HepG2 (cell line): ENCODE measurements at regions of chr2 and their contacts with region 1.

Region 1: GRCh38 chr2:42095923-42096408 is 48.1 kb downstream of the PKDCC start:
- DNase-seq: peak; percentile 81
- ATAC-seq: peak; percentile 20
- H3K4me3 ChIP-seq: no peak overlapping the region
- H3K27ac ChIP-seq: peak overlapping the region; percentile 1
- H3K4me1 ChIP-seq: peaks cover 86% of the 10 kb centered on the region
- H3K27me3 ChIP-seq: no peaks in the 10 kb centered on the region
- CTCF ChIP-seq: peak; percentile 88
- EP300 ChIP-seq: 0 out of 4 replicates have a peak, but pooled peaks of 1 of the 2 experiments have one; percentile 58
- POLR2A ChIP-seq: no peak
- RAD21 ChIP-seq: peak; percentile 88

Region 2: DNA sequence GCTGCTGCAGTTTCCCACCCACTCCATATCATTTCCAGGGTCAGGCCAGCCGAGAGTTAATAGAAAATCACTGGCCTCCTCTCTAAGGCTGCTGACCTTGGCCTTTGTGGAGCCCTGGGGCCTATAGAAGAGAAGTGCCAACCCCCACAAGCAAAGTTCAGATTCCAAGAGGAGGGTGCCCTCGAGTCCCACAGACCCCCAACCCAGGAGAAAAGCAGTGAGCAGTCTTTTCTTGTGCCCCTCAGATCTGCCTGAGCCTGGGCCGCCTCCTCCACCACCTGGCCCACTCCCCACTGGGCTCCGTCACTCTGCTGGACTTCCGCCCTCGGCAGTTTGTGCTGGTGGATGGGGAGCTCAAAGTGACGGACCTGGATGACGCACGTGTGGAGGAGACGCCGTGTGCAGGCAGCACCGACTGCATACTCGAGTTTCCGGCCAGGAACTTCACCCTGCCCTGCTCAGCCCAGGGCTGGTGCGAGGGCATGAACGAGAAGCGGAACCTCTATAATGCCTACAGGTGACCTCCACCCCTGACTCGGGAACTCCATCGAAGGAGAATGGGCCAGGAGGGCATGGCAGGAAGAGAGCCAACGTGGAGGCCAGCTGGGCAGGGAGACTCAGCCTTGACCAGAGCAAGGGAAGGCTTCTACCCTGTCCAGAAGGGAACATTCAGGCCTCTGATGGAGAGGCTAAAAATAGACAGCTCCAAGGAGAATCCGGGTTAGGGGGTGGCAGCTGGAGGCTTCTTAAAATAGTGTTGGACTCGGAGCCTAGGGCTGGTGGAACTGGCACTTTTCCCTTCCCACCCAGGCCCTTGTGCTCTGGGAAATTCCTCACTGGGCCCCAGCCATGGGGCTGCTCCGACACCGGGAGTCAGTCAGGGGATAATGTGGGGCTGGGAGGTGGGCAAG is 41.9 kb before region 1 on chr2:
- CTCF ChIA-PET with region 1: no interaction called
- POLR2A ChIA-PET with region 1: interaction called, 20 read pairs
- in situ Hi-C with region 1: no loop called
- intact Hi-C with region 1: no loop called
- DNase-seq: peak; percentile 55
- ATAC-seq: peak; percentile 28
- H3K4me3 ChIP-seq: peak overlapping the region in 1 of 3 experiments; percentile 32; a peak in 2 of 6 replicates
- H3K27ac ChIP-seq: peak overlapping the region; percentile 39
- H3K4me1 ChIP-seq: peaks cover 91% of the 10 kb centered on the region
- H3K27me3 ChIP-seq: peaks cover 0 to under 1% of the 10 kb centered on the region in 2 experiments; a peak in 1 of 5 replicates
- CTCF ChIP-seq: 0 out of 2 replicates have a peak, but pooled peaks have one; percentile 8
- EP300 ChIP-seq: peak in 1 of 2 experiments; percentile 75; a peak in 2 of 4 replicates
- POLR2A ChIP-seq: no peak
- RAD21 ChIP-seq: no peak

Region 3: GRCh38 chr2:42169100-42169873 is 73.3 kb after region 1 on chr2 and contains the start of gene EML4:
- CTCF ChIA-PET with region 1: interaction called, 5 read pairs
- POLR2A ChIA-PET with region 1: interaction called, 13 read pairs
- in situ Hi-C with region 1: loop called (anchors 5 kb)
- intact Hi-C with region 1: loop called (anchors 1 kb)
- DNase-seq: peak; percentile 82
- ATAC-seq: peak; percentile 90
- H3K4me3 ChIP-seq: peak within 1 kb of the TSS; percentile 95 to 98 (median 95)
- H3K27ac ChIP-seq: peak within 1 kb of the TSS; percentile 78
- H3K4me1 ChIP-seq: peaks cover 35% of the 10 kb centered on the region
- H3K27me3 ChIP-seq: no peaks in the 10 kb centered on the region; a peak in 1 of 5 replicates
- CTCF ChIP-seq: peak; percentile 10; the same call in 1 of the 2 replicates
- EP300 ChIP-seq: no peak
- POLR2A ChIP-seq: peak; percentile 75 to 88
- RAD21 ChIP-seq: peak; percentile 72
- total RNA-seq, gene EML4: 243 and 362 TPM in 2 replicates

Region 4: GRCh38 chr2:42196403-42197267 is 100.7 kb after region 1 on chr2:
- CTCF ChIA-PET with region 1: interaction called, 39 read pairs
- POLR2A ChIA-PET with region 1: interaction called, 21 read pairs
- in situ Hi-C with region 1: loop called (anchors 5 kb)
- intact Hi-C with region 1: loop called (anchors 1 kb)
- DNase-seq: peak; percentile 83
- ATAC-seq: peak; percentile 73
- H3K4me3 ChIP-seq: peak overlapping the region in 1 of 3 experiments; percentile 41; a peak in 1 of 6 replicates
- H3K27ac ChIP-seq: peak overlapping the region; percentile 78
- H3K4me1 ChIP-seq: peaks cover 100% of the 10 kb centered on the region
- H3K27me3 ChIP-seq: no peaks in the 10 kb centered on the region
- CTCF ChIP-seq: peak; percentile 80
- EP300 ChIP-seq: peak; percentile 62 to 87
- POLR2A ChIP-seq: no peak
- RAD21 ChIP-seq: peak; percentile 85

Region 5: GRCh38 chr2:42223855-42224268 is 127.9 kb after region 1 on chr2:
- CTCF ChIA-PET with region 1: no interaction called
- POLR2A ChIA-PET with region 1: interaction called, 3 read pairs
- in situ Hi-C with region 1: no loop called
- intact Hi-C with region 1: loop called (anchors 1 kb)
- DNase-seq: no peak
- ATAC-seq: no peak
- H3K4me3 ChIP-seq: no peak overlapping the region
- H3K27ac ChIP-seq: no peak overlapping the region
- H3K4me1 ChIP-seq: peaks cover 98% of the 10 kb centered on the region
- H3K27me3 ChIP-seq: no peaks in the 10 kb centered on the region
- CTCF ChIP-seq: no peak
- EP300 ChIP-seq: no peak
- POLR2A ChIP-seq: no peak
- RAD21 ChIP-seq: no peak

Region 6: GRCh38 chr2:42238644-42239288 is 142.8 kb after region 1 on chr2:
- CTCF ChIA-PET with region 1: interaction called, 24 read pairs
- POLR2A ChIA-PET with region 1: interaction called, 4 read pairs
- in situ Hi-C with region 1: loop called (anchors 5 kb)
- intact Hi-C with region 1: loop called (anchors 1 kb)
- DNase-seq: peak; percentile 53
- ATAC-seq: peak; percentile 77
- H3K4me3 ChIP-seq: no peak overlapping the region
- H3K27ac ChIP-seq: no peak overlapping the region
- H3K4me1 ChIP-seq: peaks cover 100% of the 10 kb centered on the region
- H3K27me3 ChIP-seq: no peaks in the 10 kb centered on the region
- CTCF ChIP-seq: peak; percentile 76
- EP300 ChIP-seq: no peak
- POLR2A ChIP-seq: peak; percentile 25 to 33; a peak in 1 of 4 replicates
- RAD21 ChIP-seq: peak; percentile 70

Region 7: GRCh38 chr2:42328148-42328833 is 232.3 kb after region 1 on chr2:
- CTCF ChIA-PET with region 1: no interaction called
- POLR2A ChIA-PET with region 1: no interaction called
- in situ Hi-C with region 1: no loop called
- intact Hi-C with region 1: loop called (anchors 5 kb)
- DNase-seq: no peak
- ATAC-seq: no peak
- H3K4me3 ChIP-seq: no peak overlapping the region
- H3K27ac ChIP-seq: no peak overlapping the region
- H3K4me1 ChIP-seq: peaks cover 39% of the 10 kb centered on the region
- H3K27me3 ChIP-seq: no peaks in the 10 kb centered on the region
- CTCF ChIP-seq: no peak
- EP300 ChIP-seq: no peak
- POLR2A ChIP-seq: no peak
- RAD21 ChIP-seq: no peak